H1 (cell line): ENCODE measurements at regions of chr10 and their contacts with region 1.

Region 1: DNA sequence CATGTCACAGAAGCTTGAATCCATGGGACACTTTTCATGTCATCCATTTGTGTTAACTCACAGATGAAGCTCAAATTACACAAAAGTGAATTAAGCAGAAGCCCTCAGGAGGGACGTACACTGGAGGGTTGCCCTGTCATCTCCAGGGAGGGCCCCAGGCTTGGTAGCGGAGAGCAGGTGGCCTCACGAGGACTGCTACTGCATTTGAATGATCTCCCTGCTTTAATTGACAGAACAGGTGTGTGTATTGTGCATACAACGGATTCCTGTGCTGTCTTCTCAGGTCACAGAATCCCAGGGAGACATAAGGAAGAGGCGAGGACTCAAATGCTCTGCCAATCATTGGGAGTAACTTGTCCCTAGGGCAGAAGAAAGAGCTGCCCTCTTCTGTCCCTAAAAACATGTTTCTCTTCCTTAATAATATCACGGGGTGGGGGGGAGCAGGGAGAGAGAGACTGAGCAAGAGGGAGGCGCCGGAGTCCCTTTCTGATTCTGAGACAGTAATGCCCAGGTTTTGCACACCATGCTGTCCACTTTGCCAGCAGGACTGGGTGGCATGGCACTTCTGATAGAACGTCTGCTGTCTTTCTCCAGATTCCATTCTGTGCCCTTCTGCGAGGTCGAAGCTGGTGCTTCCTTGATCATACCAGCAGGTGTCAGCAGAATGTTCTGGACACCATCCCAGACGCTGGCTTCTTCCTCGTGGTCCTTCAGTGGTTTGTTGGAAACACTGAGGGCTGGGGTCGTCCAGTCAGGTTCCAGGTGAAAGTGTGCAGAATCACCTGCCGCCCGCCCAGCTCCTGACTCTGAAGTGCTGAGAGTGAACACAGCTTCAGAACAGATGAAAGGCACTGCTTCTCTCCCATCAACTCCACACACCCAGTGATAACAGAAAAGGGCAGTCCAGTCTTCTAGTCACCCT is 26.2 kb upstream of the RASGEF1A start:
- DNase-seq: no peak
- H3K4me3 ChIP-seq: no peak overlapping the region
- H3K27ac ChIP-seq: no peak overlapping the region
- H3K4me1 ChIP-seq: no peaks in the 10 kb centered on the region; a peak in 2 of 7 replicates
- H3K27me3 ChIP-seq: peaks cover 0 to 2% (median 0%) of the 10 kb centered on the region in 4 experiments; a peak in 1 of 7 replicates
- CTCF ChIP-seq: peak; percentile 73 to 82 (median 82)
- EP300 ChIP-seq: no peak
- POLR2A ChIP-seq: no peak
- RAD21 ChIP-seq: peak; percentile 85 to 89

Region 2: DNA sequence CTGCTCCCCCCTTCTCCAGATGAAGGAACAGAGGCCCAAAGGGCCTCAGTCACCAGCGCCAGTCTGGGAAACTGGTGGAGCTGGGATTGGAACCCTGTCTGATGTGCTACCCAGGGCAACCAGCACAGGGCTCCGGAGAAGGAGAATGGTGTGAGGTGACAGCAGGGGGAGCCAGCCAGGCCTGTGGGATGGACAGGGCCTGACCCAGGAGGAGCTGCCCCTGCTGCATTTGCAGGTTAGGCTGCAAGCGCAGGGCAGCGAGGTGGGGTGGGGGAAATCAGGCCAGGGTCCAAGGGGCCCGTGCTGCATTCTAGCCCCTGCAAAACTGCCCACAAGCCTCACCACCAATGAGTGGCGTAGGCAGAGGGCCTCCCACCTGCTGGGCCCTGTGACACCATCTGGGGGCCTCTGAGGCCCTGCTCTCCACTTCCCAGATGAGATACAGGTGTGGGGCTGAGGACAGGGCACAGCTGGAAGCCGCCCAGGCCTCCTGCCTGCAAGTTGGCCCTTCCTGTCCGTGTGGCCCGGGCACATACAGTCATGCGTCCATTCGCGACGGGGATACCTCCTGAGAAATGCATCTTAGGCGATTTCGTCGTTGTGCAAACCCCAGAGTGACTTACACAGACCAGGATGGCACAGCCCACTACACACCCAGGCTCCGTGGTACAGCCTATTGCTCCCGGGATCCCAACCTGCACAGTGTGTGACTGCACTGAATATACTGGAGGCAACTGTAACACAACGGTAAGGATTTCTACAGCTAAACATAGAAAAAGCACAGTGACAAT is 71.4 kb before region 1 on chr10:
- CTCF ChIA-PET with region 1: interaction called, 13 read pairs
- POLR2A ChIA-PET with region 1: no interaction called
- DNase-seq: peak in 1 of 2 experiments; percentile 76
- H3K4me3 ChIP-seq: no peak overlapping the region
- H3K27ac ChIP-seq: no peak overlapping the region
- H3K4me1 ChIP-seq: peaks cover 0 to 6% (median 2%) of the 10 kb centered on the region in 4 experiments; a peak in 4 of 7 replicates
- H3K27me3 ChIP-seq: no peaks in the 10 kb centered on the region
- CTCF ChIP-seq: peak; percentile 73 to 78 (median 75)
- EP300 ChIP-seq: no peak
- POLR2A ChIP-seq: no peak
- RAD21 ChIP-seq: peak; percentile 48 to 62

Region 3: GRCh38 chr10:43304687-43305340 is 11.8 kb after region 1 on chr10:
- CTCF ChIA-PET with region 1: interaction called, 43 read pairs
- POLR2A ChIA-PET with region 1: interaction called, 3 read pairs
- DNase-seq: peak in 1 of 2 experiments; percentile 64
- H3K4me3 ChIP-seq: peak overlapping the region; percentile 60 to 74 (median 64)
- H3K27ac ChIP-seq: no peak overlapping the region
- H3K4me1 ChIP-seq: peaks cover 0 to 5% (median 4%) of the 10 kb centered on the region in 4 experiments; a peak in 3 of 7 replicates
- H3K27me3 ChIP-seq: peaks cover 0 to 18% (median 7%) of the 10 kb centered on the region in 4 experiments; a peak in 4 of 7 replicates
- CTCF ChIP-seq: no peak
- EP300 ChIP-seq: no peak
- POLR2A ChIP-seq: no peak
- RAD21 ChIP-seq: no peak

Region 4: DNA sequence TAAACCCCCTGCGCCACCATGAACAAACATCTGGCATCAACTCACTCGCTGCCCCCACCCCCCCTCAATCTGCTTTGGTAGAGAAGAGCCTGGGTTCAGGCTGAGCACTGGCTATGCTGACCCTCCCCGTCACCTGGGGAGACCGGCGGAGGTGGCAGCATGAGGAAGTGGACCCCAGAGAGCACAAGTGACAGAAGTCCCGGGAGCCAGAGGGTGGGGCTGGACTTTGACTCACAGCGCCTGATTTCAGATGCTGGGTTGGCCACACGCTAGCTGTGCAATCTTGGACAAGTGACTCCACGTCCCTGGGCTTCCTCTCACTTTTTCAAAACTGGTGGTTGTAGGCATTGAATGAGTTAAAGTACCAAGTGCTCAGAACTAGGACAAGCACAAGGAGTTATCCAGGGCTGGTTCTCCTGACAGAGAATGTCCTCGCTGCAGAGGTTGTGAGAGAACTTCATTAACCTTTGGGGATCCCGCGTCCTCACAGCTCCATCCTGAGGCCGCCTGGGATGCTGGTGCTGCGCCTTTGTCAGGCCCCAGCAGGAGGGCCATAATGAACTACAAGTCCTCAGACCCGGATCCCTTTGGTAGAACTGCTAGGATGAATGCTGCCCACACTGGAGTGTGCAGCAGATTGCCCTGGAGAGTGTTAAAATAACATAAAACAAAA is 22.7 kb after region 1 on chr10:
- CTCF ChIA-PET with region 1: interaction called, 23 read pairs
- POLR2A ChIA-PET with region 1: no interaction called
- DNase-seq: no peak
- H3K4me3 ChIP-seq: no peak overlapping the region
- H3K27ac ChIP-seq: no peak overlapping the region
- H3K4me1 ChIP-seq: peaks cover 0 to 3% (median 1%) of the 10 kb centered on the region in 4 experiments; a peak in 2 of 7 replicates
- H3K27me3 ChIP-seq: no peaks in the 10 kb centered on the region
- CTCF ChIP-seq: peak in 1 of 3 experiments; percentile 6; a peak in 1 of 4 replicates
- EP300 ChIP-seq: no peak
- POLR2A ChIP-seq: no peak
- RAD21 ChIP-seq: peak in 1 of 2 experiments; percentile 31; a peak in 1 of 4 replicates

Region 5: GRCh38 chr10:43340619-43341018 is 47.6 kb after region 1 on chr10:
- CTCF ChIA-PET with region 1: interaction called, 20 read pairs
- POLR2A ChIA-PET with region 1: no interaction called
- DNase-seq: no peak
- H3K4me3 ChIP-seq: no peak overlapping the region
- H3K27ac ChIP-seq: no peak overlapping the region
- H3K4me1 ChIP-seq: peaks cover 4 to 11% (median 7%) of the 10 kb centered on the region in 4 experiments
- H3K27me3 ChIP-seq: no peaks in the 10 kb centered on the region
- CTCF ChIP-seq: no peak
- EP300 ChIP-seq: no peak
- POLR2A ChIP-seq: no peak
- RAD21 ChIP-seq: no peak